ENCODE measurements at regions of chr4 and their contacts with region 1.

Region 1: GRCh38 chr4:2837904-2838496 is 5.6 kb upstream of the ADD1 start:
- DNase-seq: peak; percentile 88
- ATAC-seq: peak; percentile 84
- H3K4me3 Mint-ChIP-seq: peak overlapping the region; percentile 71
- H3K27ac Mint-ChIP-seq: peak overlapping the region; percentile 95
- H3K4me1 Mint-ChIP-seq: peaks cover 70% of the 10 kb centered on the region
- H3K27me3 Mint-ChIP-seq: no peaks in the 10 kb centered on the region

Region 2: DNA sequence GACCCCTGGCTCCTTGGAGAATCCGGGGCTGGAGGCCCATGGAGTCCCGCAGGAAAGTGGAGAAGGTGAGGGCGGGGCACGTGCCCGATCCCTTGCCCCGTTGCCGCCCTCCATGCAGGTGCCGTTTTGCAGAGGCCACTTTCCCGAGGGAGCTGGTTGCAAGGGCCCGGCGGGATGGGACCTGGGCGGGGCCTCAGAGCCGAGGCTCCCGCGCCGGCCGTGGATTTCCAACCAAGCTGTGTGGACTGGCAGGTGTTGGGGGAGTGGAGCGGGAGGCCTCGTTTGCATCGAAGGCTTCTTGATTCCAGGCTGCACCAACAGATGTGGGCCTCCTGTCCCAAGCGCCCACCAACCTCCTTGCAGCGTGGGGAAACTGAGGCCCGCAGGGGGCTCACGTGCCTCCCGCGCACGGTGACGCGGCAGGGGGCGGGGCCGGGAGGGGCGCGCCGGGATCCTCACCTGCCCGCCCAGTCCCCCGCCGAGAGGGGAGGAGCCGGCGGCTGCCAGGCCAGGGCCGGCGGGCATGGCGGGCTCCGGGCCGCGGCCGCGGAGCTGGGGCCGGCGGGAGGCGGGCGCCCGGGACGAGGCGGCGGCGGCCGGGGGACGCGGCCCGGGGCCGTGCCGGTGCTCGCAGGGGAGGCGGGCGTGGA is 20.2 kb before region 1 on chr4:
- CTCF ChIA-PET with region 1: interaction called, 10 read pairs
- DNase-seq: no peak
- ATAC-seq: peak; percentile 42
- H3K4me3 Mint-ChIP-seq: peak overlapping the region; percentile 72
- H3K27ac Mint-ChIP-seq: no peak overlapping the region
- H3K4me1 Mint-ChIP-seq: peaks cover 56% of the 10 kb centered on the region
- H3K27me3 Mint-ChIP-seq: no peaks in the 10 kb centered on the region

Measured in activated CD8-positive, alpha-beta memory T cell treated with anti-CD3 and anti-CD28 coated beads, Interleukin-2, amount 10 ng/mL, durations not matched to agents 7 days and 5 days (primary cell).